Activated CD4-positive, alpha-beta memory T cell treated with anti-CD3 and anti-CD28 coated beads, Interleukin-2, amount 10 ng/mL, durations not matched to agents 7 days and 5 days (primary cell): ENCODE measurements at regions of chr6 and their contacts with region 1.

Region 1: DNA sequence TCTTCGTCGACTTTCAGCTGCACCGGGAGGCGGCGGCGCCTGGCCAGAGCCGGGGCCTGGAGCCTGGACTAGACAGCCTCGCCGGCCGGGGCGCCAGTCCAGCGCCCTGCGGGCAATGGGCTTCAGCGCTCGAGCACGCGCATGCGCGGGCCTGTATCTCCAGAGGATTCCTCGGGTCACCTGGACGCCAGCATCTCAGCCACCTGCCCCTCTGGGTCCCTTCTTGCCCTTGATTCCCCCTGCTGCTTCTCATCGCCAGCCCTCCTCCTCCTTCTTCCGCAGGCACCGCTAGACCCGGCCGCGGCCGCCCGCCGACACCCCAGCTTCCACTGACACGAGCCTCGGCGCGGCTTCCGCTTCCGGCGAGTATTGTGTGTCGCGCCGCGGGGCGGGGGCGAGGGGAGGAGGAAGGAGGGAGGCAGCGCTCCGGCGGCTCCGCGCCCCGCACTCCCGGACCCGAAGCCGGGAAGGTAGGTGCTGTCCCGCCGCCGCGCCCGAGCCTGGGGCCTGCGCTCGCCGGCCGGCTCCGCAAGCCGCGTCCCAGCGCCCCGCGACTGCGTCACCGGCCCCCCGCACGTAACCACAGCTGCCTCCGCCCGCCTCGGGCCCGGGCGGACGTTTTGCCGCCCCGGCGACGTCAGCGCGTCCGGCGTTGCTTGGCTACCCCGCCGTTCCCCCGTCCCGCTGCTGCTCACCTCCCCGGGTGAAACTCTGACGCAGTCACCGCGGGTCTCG is at the start of gene TRIM39:
- DNase-seq: peak; percentile 91
- H3K4me3 Mint-ChIP-seq: peak within 1 kb of the TSS; percentile 92
- H3K27ac Mint-ChIP-seq: peak within 1 kb of the TSS; percentile 99
- H3K4me1 Mint-ChIP-seq: peaks cover 58% of the 10 kb centered on the region
- H3K27me3 Mint-ChIP-seq: no peaks in the 10 kb centered on the region
- total RNA-seq, gene TRIM39: 15.1 to 15.6 TPM

Region 2: DNA sequence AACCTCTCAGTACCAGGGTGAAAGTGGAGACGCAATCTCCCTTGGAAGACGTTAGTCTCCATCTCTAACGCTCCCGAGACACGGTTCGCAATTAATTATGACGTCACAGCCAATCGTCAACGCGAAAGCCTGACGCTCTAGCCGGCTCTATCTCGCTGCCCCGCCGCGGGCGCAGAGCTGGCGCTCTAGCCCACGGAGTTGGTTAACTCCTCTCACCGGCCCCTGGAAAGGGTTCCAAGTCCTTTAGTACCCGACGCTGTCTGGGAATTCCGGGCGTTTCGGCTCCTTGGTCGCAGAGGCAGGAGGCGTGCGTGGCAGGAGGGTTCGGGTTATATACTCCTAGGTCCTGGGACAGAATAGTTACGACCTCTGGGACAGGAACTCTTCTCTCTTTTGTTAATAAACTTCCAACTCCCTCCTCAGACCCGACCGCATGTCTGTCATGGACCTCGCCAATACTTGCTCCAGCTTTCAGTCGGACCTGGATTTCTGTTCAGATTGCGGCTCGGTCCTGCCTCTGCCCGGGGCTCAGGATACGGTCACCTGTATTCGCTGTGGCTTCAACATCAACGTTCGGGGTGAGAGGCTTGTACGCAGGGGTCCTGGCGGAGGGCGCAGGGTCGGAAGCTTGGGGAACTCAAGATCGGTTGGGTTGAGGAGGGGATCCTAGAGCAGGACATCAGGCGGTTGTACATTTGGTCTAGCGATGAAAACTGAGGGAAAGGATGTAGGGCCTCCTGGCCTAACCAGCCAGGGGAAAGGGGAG is 265.4 kb before region 1 on chr6 and contains the start of gene POLR1H:
- CTCF ChIA-PET with region 1: no interaction called
- POLR2A ChIA-PET with region 1: interaction called, 12 read pairs
- DNase-seq: peak; percentile 90
- H3K4me3 Mint-ChIP-seq: peak within 1 kb of the TSS; percentile 98
- H3K27ac Mint-ChIP-seq: peak within 1 kb of the TSS; percentile 97
- H3K4me1 Mint-ChIP-seq: peaks cover 53% of the 10 kb centered on the region
- H3K27me3 Mint-ChIP-seq: no peaks in the 10 kb centered on the region
- total RNA-seq, gene POLR1H: 75.5 to 77.8 TPM

Region 3: DNA sequence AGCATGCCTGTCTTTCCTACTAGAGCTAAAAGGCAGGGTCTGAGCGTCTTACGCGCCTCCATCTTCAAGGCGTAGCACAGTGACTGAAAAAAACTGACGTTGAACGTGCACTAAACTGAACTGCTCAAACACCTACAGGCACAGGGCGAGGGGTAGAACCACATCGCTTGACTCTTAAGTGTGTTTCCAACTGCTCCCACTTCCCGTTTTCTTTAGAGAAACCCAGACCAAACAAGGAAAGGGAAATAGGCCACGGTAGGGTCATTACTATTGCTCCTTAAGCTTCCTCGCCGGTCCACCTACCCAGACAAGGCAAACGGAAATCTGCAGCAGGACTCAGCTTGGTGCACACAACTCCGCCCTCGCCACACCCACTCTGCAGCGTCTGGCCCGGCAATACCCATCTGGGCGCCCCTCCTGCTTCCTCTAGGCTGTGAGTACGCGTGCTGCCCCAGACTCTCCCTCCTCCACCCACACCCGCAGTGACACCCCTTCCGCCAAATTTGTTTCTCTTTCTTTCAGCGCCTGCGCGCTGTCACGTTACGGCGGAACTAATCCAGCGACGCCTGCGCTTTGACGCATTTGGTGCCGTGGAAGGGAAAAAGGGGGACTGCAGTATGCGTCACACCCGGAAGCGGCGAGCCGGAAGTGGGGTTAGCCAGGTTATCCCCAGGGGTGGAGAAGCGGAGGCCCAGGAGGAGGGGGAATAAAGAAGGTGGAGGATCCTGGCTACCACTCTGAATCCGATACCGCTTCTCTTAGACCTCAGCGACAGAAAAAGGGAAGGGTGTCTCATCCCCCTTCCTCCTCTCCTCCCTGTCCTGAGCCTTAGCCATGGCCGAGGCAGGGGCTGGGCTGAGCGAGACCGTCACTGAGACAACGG is 259.9 kb before region 1 on chr6 and contains the start of gene PPP1R11:
- CTCF ChIA-PET with region 1: no interaction called
- POLR2A ChIA-PET with region 1: interaction called, 12 read pairs
- DNase-seq: peak; percentile 99
- H3K4me3 Mint-ChIP-seq: peak within 1 kb of the TSS; percentile 93
- H3K27ac Mint-ChIP-seq: peak within 1 kb of the TSS; percentile 94
- H3K4me1 Mint-ChIP-seq: peaks cover 63% of the 10 kb centered on the region
- H3K27me3 Mint-ChIP-seq: peaks cover 8% of the 10 kb centered on the region
- total RNA-seq, gene PPP1R11: 62.5 to 62.6 TPM

Region 4: DNA sequence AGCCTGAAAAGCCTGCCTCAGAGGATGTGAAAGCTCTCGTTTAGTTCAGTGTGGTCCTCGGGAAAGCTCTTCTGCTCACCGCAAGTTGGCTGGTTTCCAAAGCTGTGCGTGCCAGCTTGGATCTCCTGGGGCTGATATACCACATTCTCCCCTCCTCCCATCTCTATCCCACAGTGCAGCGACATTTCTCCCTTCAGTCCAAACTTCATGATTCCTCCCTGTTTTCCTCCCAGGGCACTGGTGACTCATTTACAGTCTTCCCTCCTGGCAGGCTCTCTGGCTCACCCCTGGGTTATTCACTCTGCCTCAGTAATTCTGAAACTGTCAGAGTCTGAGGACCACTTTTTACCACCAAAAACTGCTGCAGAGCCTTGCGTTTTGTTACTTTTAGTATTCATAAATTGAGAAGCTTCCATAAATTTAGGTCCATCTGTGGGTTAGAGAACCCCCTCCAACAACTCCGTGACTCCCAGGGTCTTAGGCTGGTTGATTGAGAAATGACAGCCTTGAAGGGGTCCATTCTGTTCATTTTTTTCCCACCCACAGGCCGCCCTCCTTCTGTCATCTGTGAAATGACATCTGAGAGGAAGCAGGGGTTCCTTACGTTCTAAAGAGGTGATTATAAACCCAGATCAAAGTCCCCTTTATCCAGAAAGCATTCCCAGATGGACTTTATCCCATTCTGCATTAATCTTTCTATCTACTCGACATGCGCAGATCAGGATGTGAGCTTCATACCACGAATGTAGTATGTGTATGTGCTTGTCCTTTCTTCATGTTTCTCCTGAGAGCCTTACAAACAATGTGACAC is 171.8 kb before region 1 on chr6:
- CTCF ChIA-PET with region 1: no interaction called
- POLR2A ChIA-PET with region 1: no interaction called
- DNase-seq: no peak
- H3K4me3 Mint-ChIP-seq: no peak overlapping the region
- H3K27ac Mint-ChIP-seq: no peak overlapping the region
- H3K4me1 Mint-ChIP-seq: peaks cover 16% of the 10 kb centered on the region
- H3K27me3 Mint-ChIP-seq: peaks cover 60% of the 10 kb centered on the region

Region 5: DNA sequence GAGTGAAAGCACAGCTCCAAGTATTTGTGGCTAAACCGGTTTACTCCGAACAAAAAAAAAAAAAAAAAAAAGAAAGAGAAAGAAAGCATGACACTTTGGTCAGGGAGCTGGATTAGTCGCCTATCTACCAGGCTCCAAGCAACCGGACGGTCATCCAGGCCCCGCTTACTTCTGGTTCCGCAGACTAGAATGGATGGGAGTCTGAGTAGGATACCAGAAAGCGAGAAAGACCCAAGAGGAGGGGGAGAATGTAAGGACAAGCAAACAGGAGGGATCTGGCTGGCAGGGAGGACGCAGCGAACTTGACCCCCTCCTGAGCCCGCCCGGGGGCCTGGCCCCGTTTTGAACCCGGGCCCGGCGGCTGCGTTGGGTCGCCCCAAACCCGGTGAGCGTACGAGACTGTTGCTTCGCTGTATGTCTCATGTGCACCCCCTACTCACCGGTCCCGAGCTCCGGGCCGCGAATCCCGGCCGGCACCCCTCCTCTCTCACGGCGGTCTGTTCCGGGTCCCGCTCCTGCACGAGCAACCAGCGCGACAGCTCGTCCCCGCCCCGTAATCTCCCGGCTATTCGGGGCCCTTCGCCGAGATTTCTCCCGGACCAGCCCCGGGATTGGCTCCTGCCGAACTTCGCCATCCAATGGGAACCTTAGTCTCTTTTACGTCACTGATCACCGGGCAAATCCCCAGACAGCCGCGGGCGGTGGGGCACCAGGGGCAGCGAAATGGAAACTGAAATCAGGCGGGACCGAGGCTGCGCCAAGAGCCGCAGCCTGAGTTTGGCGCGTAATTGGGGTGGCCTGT is 113.6 kb before region 1 on chr6 and contains the start of gene TRIM26:
- CTCF ChIA-PET with region 1: interaction called, 5 read pairs
- POLR2A ChIA-PET with region 1: interaction called, 49 read pairs
- DNase-seq: peak; percentile 99
- H3K4me3 Mint-ChIP-seq: peak within 1 kb of the TSS; percentile 79
- H3K27ac Mint-ChIP-seq: peak within 1 kb of the TSS; percentile 99
- H3K4me1 Mint-ChIP-seq: peaks cover 56% of the 10 kb centered on the region
- H3K27me3 Mint-ChIP-seq: no peaks in the 10 kb centered on the region
- total RNA-seq, gene TRIM26: 91.1 to 91.5 TPM

Region 6: GRCh38 chr6:30315156-30315555 is 11.5 kb before region 1 on chr6:
- CTCF ChIA-PET with region 1: no interaction called
- POLR2A ChIA-PET with region 1: interaction called, 15 read pairs
- DNase-seq: no peak
- H3K4me3 Mint-ChIP-seq: no peak overlapping the region
- H3K27ac Mint-ChIP-seq: no peak overlapping the region
- H3K4me1 Mint-ChIP-seq: peaks cover 23% of the 10 kb centered on the region
- H3K27me3 Mint-ChIP-seq: no peaks in the 10 kb centered on the region

Region 7: DNA sequence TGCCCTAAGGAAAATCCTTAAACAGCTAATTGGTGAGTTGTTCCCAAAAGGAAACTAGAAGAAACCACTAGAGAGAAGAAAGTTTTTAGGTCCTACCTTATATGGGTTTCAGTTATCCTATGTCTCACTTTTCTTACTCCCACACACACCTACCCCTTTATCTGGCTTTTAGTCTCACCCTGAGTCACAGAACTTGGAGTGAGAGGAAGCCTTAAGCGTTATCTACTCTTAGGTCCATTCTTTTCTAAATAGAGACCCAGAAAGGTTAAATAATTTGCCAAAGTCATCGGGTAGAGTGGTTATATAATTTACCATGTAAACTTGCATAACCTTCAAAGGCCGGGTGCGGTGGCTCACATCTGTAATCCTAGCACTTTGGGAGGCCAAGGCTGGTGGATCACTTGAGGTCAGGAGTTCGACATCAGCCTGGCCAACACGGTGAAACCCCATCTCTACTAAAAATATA is 13.9 kb after region 1 on chr6:
- CTCF ChIA-PET with region 1: no interaction called
- POLR2A ChIA-PET with region 1: interaction called, 25 read pairs
- DNase-seq: no peak
- H3K4me3 Mint-ChIP-seq: no peak overlapping the region
- H3K27ac Mint-ChIP-seq: no peak overlapping the region
- H3K4me1 Mint-ChIP-seq: peaks cover 10% of the 10 kb centered on the region
- H3K27me3 Mint-ChIP-seq: no peaks in the 10 kb centered on the region

Region 8: DNA sequence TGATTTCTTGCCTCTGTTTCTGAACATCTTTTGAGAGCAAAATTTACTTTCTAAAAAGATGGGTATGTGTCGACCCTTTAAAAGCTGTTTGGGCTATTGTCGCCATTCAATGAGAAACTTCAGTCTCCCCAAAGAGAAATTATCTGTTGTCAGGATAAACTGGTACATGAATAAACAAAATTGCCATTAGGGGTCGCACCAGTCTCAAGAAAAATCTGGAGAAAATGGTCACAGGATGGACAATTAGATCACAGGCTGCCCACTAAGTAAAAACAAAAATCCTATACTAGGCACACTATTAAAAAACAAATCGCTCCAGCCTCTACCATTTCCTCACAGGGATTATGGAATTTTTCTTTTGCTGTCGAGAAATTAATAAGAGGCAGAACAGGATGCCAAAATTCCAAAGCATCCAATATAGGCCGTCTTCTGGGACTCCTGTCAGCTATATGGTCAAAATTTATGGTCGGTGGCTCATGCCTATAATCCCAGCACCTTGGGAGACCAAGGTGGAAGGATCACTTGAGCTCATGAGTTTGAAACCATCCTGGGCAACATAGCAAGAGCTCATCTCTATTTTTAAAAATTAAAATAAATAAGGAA is 157.1 kb after region 1 on chr6:
- CTCF ChIA-PET with region 1: no interaction called
- POLR2A ChIA-PET with region 1: no interaction called
- DNase-seq: no peak
- H3K4me3 Mint-ChIP-seq: no peak overlapping the region
- H3K27ac Mint-ChIP-seq: no peak overlapping the region
- H3K4me1 Mint-ChIP-seq: peaks cover 35% of the 10 kb centered on the region
- H3K27me3 Mint-ChIP-seq: peaks cover 60% of the 10 kb centered on the region